ENCODE measurements at regions of chr4 and their contacts with region 1.

Region 1: GRCh38 chr4:185039508-185040273 is 21.4 kb downstream of the HELT start:
- DNase-seq: peak; percentile 41
- ATAC-seq: peak; percentile 87
- H3K4me3 ChIP-seq: peak overlapping the region; percentile 1 to 36; a peak in 3 of 4 replicates
- H3K27ac ChIP-seq: no peak overlapping the region; the same call in 1 of the 2 replicates
- H3K4me1 ChIP-seq: no peaks in the 10 kb centered on the region
- H3K27me3 ChIP-seq: no peaks in the 10 kb centered on the region
- CTCF ChIP-seq: peak; percentile 79

Region 2: DNA sequence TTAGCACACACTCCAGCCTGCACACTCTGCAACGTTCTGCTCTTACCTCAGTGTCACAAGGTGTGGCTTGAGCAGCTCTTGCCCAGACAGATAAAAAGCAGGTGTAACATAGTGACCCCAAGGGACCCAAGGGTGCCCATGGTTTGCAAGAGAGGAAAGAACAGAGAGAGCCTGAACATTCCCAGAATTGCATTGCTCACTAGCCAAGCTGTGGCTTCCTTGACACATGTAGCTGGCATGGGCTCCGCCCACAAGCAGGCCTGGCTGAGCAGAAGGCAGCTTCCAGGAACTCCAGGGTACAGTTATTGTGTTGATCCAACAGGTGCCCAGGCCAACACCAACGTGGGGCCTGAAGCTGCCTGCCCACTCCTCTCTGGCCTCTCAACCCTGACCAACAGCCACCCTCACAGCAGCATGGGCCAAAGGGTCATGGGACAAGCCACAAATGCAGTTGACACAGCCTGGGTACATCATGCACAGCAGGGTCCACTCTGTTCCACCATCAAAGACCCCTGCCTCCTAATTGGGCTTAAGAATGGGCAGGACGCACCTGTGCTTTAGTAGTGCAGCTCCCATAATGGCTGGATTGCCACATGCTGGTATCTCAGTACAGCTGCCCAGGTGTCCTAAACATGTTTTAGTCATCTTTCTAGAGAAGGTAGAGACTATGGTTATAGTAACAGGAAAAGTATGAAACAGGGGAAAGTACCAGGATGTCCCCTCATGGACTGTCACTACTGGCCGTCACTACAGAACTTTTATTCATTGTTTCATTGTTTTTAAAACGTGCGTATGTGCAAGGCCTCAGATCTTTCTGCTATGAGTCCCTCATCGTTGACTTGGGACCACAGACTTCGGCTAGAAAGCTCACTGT is 140.2 kb before region 1 on chr4:
- CTCF ChIA-PET with region 1: no interaction called
- POLR2A ChIA-PET with region 1: no interaction called
- in situ Hi-C with region 1: no loop called
- intact Hi-C with region 1: no loop called
- DNase-seq: no peak
- ATAC-seq: no peak
- H3K4me3 ChIP-seq: no peak overlapping the region
- H3K27ac ChIP-seq: no peak overlapping the region
- H3K4me1 ChIP-seq: no peaks in the 10 kb centered on the region
- H3K27me3 ChIP-seq: no peaks in the 10 kb centered on the region
- CTCF ChIP-seq: no peak

Region 3: GRCh38 chr4:185011408-185011807 is 28.3 kb before region 1 on chr4:
- CTCF ChIA-PET with region 1: no interaction called
- POLR2A ChIA-PET with region 1: no interaction called
- in situ Hi-C with region 1: no loop called
- intact Hi-C with region 1: no loop called
- DNase-seq: no peak
- ATAC-seq: 0 out of 2 replicates have a peak, but pooled peaks have one; percentile 73
- H3K4me3 ChIP-seq: no peak overlapping the region
- H3K27ac ChIP-seq: no peak overlapping the region
- H3K4me1 ChIP-seq: no peaks in the 10 kb centered on the region
- H3K27me3 ChIP-seq: no peaks in the 10 kb centered on the region; the same call in 1 of the 2 replicates
- CTCF ChIP-seq: peak; percentile 71

Region 4: GRCh38 chr4:185096032-185096653 is 56.5 kb after region 1 on chr4:
- CTCF ChIA-PET with region 1: interaction called, 10 read pairs
- POLR2A ChIA-PET with region 1: no interaction called
- in situ Hi-C with region 1: no loop called
- intact Hi-C with region 1: loop called (anchors 2 kb)
- DNase-seq: no peak
- ATAC-seq: no peak
- H3K4me3 ChIP-seq: no peak overlapping the region
- H3K27ac ChIP-seq: no peak overlapping the region
- H3K4me1 ChIP-seq: no peaks in the 10 kb centered on the region
- H3K27me3 ChIP-seq: no peaks in the 10 kb centered on the region; the same call in 1 of the 2 replicates
- CTCF ChIP-seq: peak; percentile 60; the same call in 1 of the 2 replicates

Region 5: GRCh38 chr4:185122681-185123345 is 83.1 kb after region 1 on chr4:
- CTCF ChIA-PET with region 1: no interaction called
- POLR2A ChIA-PET with region 1: no interaction called
- in situ Hi-C with region 1: no loop called
- intact Hi-C with region 1: no loop called
- DNase-seq: no peak
- ATAC-seq: no peak
- H3K4me3 ChIP-seq: no peak overlapping the region
- H3K27ac ChIP-seq: no peak overlapping the region
- H3K4me1 ChIP-seq: no peaks in the 10 kb centered on the region
- H3K27me3 ChIP-seq: no peaks in the 10 kb centered on the region
- CTCF ChIP-seq: no peak

Region 6: DNA sequence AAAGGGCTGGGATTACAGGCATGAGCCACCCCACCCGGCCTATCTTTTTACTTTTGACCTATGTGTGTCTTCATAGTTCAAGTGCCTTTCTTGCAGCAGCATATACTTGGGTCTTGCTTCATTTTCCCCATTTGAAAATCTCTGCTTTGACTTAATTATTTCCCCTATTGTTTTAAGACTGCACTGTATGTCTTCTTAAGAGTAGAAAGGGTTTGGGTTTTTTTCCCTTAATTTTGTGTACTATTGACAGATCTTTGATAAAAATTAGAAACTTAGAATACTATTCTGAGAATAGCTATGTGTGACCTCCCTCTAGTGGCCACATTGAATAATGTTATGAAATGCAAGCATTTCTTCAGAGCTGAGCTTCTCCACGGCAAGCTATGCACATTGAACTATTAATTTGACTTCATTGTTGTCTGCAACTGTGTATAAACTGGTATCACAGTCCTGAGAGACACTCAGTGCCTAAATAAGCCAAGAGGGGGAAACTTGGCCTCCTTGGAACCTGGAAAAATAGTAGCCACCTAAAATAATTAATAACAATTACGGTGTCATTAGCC is 94.7 kb after region 1 on chr4:
- CTCF ChIA-PET with region 1: interaction called, 12 read pairs
- POLR2A ChIA-PET with region 1: no interaction called
- in situ Hi-C with region 1: no loop called
- intact Hi-C with region 1: loop called (anchors 2 kb)
- DNase-seq: no peak
- ATAC-seq: peak; percentile 90
- H3K4me3 ChIP-seq: no peak overlapping the region
- H3K27ac ChIP-seq: no peak overlapping the region
- H3K4me1 ChIP-seq: no peaks in the 10 kb centered on the region
- H3K27me3 ChIP-seq: no peaks in the 10 kb centered on the region
- CTCF ChIP-seq: peak; percentile 65; the same call in 1 of the 2 replicates

Region 7: GRCh38 chr4:185865901-185866328 is 826.2 kb after region 1 on chr4:
- CTCF ChIA-PET with region 1: no interaction called
- POLR2A ChIA-PET with region 1: no interaction called
- in situ Hi-C with region 1: no loop called
- intact Hi-C with region 1: no loop called
- DNase-seq: no peak
- ATAC-seq: no peak
- H3K4me3 ChIP-seq: no peak overlapping the region
- H3K27ac ChIP-seq: no peak overlapping the region
- H3K4me1 ChIP-seq: no peaks in the 10 kb centered on the region
- H3K27me3 ChIP-seq: no peaks in the 10 kb centered on the region
- CTCF ChIP-seq: no peak